Caco-2 (cell line): ENCODE measurements at regions of chr14 and their contacts with region 1.

Region 1: DNA sequence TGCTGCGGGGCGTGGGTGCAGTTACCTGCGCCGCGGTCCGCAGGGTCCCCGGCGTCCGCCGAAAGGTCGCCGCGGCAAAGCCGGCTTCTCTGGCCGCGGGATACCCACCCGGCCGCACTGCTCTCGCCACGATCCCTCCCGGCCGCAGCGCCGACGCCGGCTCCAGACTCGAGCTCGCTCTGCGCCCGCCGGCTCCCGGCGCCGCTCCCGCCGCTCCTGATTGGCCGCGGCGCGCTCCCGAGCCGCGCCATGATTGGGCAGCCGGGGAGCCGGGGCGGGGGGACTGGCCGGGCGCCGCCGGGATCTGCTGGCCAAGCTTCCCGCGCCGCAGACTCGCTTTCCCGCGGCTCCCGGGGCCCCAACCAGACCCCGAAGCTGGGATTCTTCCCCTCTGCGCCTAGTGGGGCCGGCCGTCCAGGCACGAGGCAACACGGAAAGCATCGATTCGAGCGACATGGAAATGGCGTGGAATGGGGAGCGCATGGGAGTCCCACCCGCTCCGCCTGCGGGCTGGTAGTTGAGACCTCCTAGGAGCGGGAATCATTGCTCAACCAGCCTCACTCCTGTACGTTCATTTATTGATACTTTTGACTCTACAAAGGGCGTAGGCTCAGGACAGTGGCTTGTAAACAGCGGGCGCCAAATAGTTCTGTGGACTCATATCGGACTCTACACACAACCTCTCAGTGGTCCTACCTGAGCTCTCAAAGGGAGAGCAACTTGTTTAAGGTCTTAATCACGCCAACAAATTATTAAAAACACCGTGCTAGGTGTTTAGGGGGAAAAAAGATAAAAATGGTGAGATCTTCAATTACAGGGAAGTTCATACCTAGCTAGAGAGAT is 36.4 kb upstream of the STON2 start:
- DNase-seq: peak; percentile 80 to 92
- H3K4me3 ChIP-seq: peak overlapping the region; percentile 79
- H3K4me3 Mint-ChIP-seq: peak overlapping the region; percentile 95
- H3K27ac Mint-ChIP-seq: peak overlapping the region; percentile 61
- H3K4me1 ChIP-seq: no peaks in the 10 kb centered on the region
- H3K4me1 Mint-ChIP-seq: peaks cover 27% of the 10 kb centered on the region
- H3K27me3 ChIP-seq: no peaks in the 10 kb centered on the region
- H3K27me3 Mint-ChIP-seq: no peaks in the 10 kb centered on the region
- CTCF ChIP-seq: no peak

Region 2: DNA sequence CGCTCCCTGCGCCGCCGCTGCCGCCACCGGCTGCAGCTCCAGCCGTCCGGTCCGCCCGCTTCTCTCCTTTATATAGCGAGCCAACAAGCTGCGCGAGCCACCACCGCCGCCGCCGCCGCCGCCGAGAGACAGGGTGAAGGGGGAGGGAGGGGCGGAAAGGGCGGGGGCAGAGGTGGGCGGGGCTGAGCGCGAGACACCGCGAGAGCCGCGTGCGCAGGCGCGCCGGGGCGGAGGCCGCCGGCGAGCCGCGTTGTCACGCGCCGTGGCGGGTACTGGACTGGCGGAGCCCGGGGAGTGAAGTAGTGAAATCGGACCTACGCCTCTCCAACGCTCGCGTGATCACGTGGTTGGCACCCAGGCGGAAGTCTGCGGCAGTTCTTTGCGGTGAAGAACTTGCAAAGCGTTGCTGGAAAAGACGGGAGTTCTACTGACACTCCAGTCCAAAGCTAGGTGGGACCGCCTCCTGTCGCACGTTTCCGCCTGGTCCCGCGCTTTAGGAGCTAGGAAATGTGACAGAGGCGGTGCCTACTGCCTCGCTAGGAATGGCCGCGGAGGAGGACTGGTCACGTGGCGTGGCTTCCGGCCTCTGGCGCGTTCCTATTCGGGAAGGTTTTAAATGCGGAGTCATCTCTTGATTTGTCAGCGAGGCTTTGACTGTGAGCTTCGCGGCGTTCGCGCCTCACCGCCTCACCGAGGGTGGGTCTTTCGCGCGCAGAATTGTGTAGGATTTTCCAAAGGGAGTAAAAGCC is 215.5 kb before region 1 on chr14 and contains the start of gene GTF2A1:
- CTCF ChIA-PET with region 1: interaction called, 6 read pairs
- POLR2A ChIA-PET with region 1: interaction called, 11 read pairs
- intact Hi-C with region 1: loop called (anchors 2 kb)
- DNase-seq: peak; percentile 95 to 96
- H3K4me3 ChIP-seq: peak within 1 kb of the TSS; percentile 77
- H3K4me3 Mint-ChIP-seq: peak within 1 kb of the TSS; percentile 97
- H3K27ac Mint-ChIP-seq: peak within 1 kb of the TSS; percentile 98
- H3K4me1 ChIP-seq: peaks cover 23% of the 10 kb centered on the region
- H3K4me1 Mint-ChIP-seq: peaks cover 9% of the 10 kb centered on the region
- H3K27me3 ChIP-seq: no peaks in the 10 kb centered on the region
- H3K27me3 Mint-ChIP-seq: peaks cover 3% of the 10 kb centered on the region
- CTCF ChIP-seq: no peak
- total RNA-seq, gene GTF2A1: 35.1 and 42.7 TPM in 2 replicates

Region 3: DNA sequence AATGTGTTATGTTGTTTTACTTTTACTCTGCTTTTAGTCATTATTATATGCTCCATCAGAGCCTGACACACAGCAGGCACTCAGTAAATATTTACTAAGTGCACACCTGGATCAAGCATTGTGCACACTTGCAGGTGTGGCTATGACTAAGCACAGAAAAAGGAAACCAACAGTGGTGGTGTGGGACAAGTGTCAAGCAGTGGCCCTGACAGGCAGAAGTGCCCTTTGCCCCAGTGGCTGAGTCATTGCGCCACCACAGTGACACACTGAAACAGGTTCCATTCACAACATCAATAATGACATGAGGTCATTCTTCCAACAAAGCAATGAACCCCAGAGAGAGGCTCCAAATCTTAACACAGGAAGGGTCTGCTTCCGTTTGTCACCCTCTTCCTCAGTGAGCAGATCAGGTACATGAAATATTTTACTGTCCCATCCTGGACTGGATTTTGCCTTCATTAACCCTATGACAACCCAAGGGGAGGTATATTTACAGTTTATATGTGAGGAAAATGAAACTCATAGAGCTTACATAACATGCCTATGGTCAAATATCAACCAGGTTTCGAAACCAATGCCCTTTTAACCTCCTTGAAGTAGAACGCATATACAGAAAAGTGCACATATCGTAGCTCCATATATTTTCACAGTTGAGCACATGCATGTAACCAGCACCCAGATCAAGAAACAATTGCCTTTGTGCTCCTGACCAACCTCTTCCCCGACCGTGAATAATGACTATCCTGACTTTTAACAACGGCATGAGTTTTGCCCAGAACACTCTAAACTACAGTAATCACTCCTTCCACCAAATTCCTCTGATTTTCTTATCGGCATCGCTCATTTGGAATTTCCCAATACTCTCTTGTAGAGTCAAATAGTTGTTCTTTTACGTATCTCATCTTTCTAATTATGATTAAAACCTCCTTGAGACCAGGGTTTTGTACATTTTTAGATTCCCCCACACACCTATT is 133.0 kb before region 1 on chr14:
- CTCF ChIA-PET with region 1: interaction called, 3 read pairs
- POLR2A ChIA-PET with region 1: interaction called, 3 read pairs
- intact Hi-C with region 1: loop called (anchors 1 kb)
- DNase-seq: peak; percentile 91 to 95
- H3K4me3 ChIP-seq: no peak overlapping the region; the same call in 1 of the 2 replicates
- H3K4me3 Mint-ChIP-seq: peak overlapping the region; percentile 66
- H3K27ac Mint-ChIP-seq: peak overlapping the region; percentile 83
- H3K4me1 ChIP-seq: peaks cover 32% of the 10 kb centered on the region
- H3K4me1 Mint-ChIP-seq: peaks cover 39% of the 10 kb centered on the region
- H3K27me3 ChIP-seq: no peaks in the 10 kb centered on the region
- H3K27me3 Mint-ChIP-seq: no peaks in the 10 kb centered on the region
- CTCF ChIP-seq: no peak

Region 4: GRCh38 chr14:81400852-81401251 is 35.7 kb before region 1 on chr14:
- CTCF ChIA-PET with region 1: no interaction called
- POLR2A ChIA-PET with region 1: no interaction called
- intact Hi-C with region 1: loop called (anchors 2 kb)
- DNase-seq: peak; percentile 69 to 83
- H3K4me3 ChIP-seq: no peak overlapping the region
- H3K4me3 Mint-ChIP-seq: no peak overlapping the region
- H3K27ac Mint-ChIP-seq: peak overlapping the region; percentile 48
- H3K4me1 ChIP-seq: peaks cover 15% of the 10 kb centered on the region
- H3K4me1 Mint-ChIP-seq: no peaks in the 10 kb centered on the region
- H3K27me3 ChIP-seq: no peaks in the 10 kb centered on the region
- H3K27me3 Mint-ChIP-seq: no peaks in the 10 kb centered on the region
- CTCF ChIP-seq: no peak

Region 5: DNA sequence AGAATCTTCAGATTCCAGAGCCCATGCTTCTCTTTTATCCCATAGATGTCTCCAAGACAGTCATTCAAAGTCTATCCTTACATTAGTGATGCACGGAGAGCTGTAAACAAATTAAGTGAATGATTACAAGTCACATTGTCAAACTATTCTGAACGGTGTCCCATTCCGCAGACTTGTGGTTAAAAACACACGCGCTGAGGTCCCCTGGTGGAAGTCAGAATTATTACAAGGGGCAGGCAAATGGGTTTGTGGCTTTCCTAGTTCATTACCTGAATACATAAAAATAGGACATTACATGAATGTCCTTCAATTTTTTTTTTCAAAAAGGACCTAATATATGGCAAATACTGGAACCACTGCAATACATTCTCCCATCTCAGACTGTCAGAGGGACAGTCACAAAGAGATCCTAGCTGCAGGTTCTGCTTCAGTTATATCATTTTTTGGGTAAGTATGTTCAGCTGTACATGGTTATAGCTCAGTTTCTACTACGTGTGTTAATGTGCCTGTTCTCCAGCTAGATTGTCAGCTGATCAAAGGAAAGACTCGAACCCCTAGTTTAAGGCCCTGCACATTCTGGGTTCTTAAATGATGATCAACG is 16.7 kb after region 1 on chr14:
- CTCF ChIA-PET with region 1: interaction called, 3 read pairs
- POLR2A ChIA-PET with region 1: no interaction called
- intact Hi-C with region 1: loop called (anchors 1 kb)
- DNase-seq: peak; percentile 52 to 69
- H3K4me3 ChIP-seq: no peak overlapping the region
- H3K4me3 Mint-ChIP-seq: no peak overlapping the region
- H3K27ac Mint-ChIP-seq: no peak overlapping the region
- H3K4me1 ChIP-seq: 0 out of 2 replicates have a peak, but pooled peaks cover 5% of the 10 kb centered on the region
- H3K4me1 Mint-ChIP-seq: no peaks in the 10 kb centered on the region
- H3K27me3 ChIP-seq: no peaks in the 10 kb centered on the region
- H3K27me3 Mint-ChIP-seq: no peaks in the 10 kb centered on the region
- CTCF ChIP-seq: peak; percentile 85 to 88